ENCODE measurements at regions of chr5 and their contacts with region 1.

Region 1: GRCh38 chr5:58999804-59000595 is 417.1 kb downstream of the RAB3C start:
- DNase-seq: no peak
- ATAC-seq: no peak
- H3K4me3 ChIP-seq: no peak overlapping the region
- H3K27ac ChIP-seq: no peak overlapping the region
- H3K4me1 ChIP-seq: no peaks in the 10 kb centered on the region
- H3K27me3 ChIP-seq: no peaks in the 10 kb centered on the region
- CTCF ChIP-seq: no peak

Region 2: GRCh38 chr5:58886315-58887207 is 113.4 kb before region 1 on chr5:
- intact Hi-C with region 1: loop called in 1 of 3 experiments (anchors 5 kb)
- DNase-seq: peak; percentile 32 to 73 (median 53)
- ATAC-seq: peak; percentile 79 to 92 (median 87)
- H3K4me3 ChIP-seq: no peak overlapping the region
- H3K27ac ChIP-seq: no peak overlapping the region
- H3K4me1 ChIP-seq: no peaks in the 10 kb centered on the region
- H3K27me3 ChIP-seq: no peaks in the 10 kb centered on the region
- CTCF ChIP-seq: peak; percentile 68 to 88 (median 86)

Region 3: GRCh38 chr5:58898538-58898937 is 101.5 kb before region 1 on chr5:
- intact Hi-C with region 1: loop called in 2 of 3 experiments (anchors 5 kb)
- DNase-seq: no peak
- ATAC-seq: no peak
- H3K4me3 ChIP-seq: no peak overlapping the region
- H3K27ac ChIP-seq: no peak overlapping the region
- H3K4me1 ChIP-seq: no peaks in the 10 kb centered on the region
- H3K27me3 ChIP-seq: no peaks in the 10 kb centered on the region
- CTCF ChIP-seq: no peak

Region 4: DNA sequence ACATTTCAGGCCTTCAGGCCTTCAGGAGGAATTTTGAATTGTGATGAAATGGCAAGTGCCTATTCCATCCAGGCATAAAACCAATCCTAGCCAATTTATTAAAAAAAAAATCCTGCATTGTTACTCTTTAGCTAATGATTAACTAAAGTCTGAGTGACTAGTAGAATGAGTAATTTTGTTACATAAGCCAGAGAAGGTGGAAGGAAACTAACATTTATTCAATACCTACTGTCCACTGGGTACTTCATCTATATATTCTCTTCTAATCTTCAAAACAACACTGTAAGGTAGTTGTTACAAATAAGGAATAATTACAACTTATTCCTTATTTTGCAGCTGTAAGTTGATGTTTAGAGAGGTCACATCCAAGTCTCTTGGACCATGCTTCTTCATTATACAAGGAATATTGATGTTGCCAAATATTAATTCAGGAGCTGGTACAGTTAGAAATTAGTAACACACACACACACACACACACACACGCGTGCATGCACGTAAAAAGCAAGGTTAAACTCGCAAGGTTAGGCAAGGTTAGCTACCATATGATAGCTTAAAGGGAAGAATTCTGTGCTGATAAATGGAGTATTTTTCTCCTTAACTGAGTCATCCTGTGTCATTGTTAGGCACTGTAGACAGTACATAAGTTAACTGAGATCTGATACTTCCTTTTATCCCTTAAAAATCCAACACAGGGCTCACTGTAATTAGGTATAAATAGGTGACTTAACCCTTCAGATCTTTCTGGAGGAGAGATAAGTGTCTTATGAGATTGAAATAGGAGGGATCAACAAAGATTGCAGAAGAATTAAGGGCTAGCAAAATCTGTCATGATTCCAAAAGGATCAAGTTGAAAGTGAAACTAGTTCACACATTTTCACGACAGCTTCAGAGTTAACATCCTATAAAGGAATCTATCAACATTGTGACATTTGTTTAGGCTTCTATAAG is 296.6 kb after region 1 on chr5:
- intact Hi-C with region 1: no loop called
- DNase-seq: no peak
- ATAC-seq: peak; percentile 89 to 93 (median 90)
- H3K4me3 ChIP-seq: peak overlapping the region in 1 of 4 donors; percentile 28
- H3K27ac ChIP-seq: peak overlapping the region in 3 of 4 donors; percentile 53 to 72 (median 68)
- H3K4me1 ChIP-seq: peaks cover 0 to 8% (median 0%) of the 10 kb centered on the region in 3 donors
- H3K27me3 ChIP-seq: no peaks in the 10 kb centered on the region
- CTCF ChIP-seq: no peak